ENCODE measurements at regions of chr20 and their contacts with region 1.

Region 1: GRCh38 chr20:35303735-35304491 is 11.7 kb upstream of the FAM83C start:
- DNase-seq: peak; percentile 89
- H3K4me3 ChIP-seq: no peak overlapping the region
- H3K27ac ChIP-seq: peak overlapping the region; percentile 95
- H3K4me1 ChIP-seq: peaks cover 74% of the 10 kb centered on the region
- H3K27me3 ChIP-seq: no peaks in the 10 kb centered on the region
- CTCF ChIP-seq: peak; percentile 88 to 97

Region 2: DNA sequence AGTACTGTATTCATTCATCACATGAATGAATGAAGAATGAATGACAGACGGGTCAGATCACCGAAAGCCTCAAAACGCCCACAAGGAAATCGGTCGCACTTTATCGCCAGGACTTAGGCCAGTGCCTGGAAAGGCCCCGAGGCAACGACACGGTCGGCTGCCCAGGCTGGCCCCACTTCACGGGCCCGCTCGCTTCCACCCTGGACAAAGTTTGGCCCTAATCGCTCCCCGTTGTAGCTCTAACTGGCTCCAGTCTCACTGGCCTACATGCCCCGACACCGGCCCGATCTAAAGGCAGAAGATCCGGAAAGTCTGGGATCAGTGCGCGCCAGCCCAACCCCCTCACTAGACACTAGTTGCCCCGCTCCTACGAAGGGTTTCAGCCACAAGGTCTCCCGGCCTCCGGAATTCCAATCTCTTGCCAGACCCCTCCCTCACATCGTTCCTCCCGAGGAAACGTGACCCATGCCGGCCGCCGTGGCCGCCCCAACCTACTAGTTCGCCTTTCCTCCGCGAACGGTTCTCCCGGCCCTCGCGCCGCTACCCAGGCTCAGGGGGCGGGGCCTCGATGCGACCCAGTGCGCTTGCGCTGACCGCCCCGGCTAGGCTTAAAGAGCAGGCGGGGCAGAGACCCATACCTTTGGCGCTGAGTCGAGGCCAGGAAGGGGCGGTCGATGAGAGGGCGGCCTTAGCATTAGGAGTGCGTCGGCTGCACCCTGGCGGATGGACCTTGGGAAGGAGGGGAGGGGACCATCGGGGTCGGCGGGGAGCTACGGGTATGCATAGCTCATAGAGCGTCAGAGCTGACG is 348.5 kb before region 1 on chr20 and contains the starts of genes GSS and MYH7B:
- CTCF ChIA-PET with region 1: no interaction called
- dilution Hi-C with region 1: no loop called
- in situ Hi-C with region 1: no loop called
- intact Hi-C with region 1: no loop called
- DNase-seq: peak; percentile 95
- H3K4me3 ChIP-seq: peak within 1 kb of the TSS; percentile 68 to 83 (median 79)
- H3K27ac ChIP-seq: peak within 1 kb of the TSS; percentile 76
- H3K4me1 ChIP-seq: peaks cover 6% of the 10 kb centered on the region
- H3K27me3 ChIP-seq: no peaks in the 10 kb centered on the region
- CTCF ChIP-seq: peak; percentile 6 to 66
- total RNA-seq, gene GSS: 102 to 115 TPM
- total RNA-seq, gene MYH7B: under 0.01 to 0.28 TPM

Region 3: DNA sequence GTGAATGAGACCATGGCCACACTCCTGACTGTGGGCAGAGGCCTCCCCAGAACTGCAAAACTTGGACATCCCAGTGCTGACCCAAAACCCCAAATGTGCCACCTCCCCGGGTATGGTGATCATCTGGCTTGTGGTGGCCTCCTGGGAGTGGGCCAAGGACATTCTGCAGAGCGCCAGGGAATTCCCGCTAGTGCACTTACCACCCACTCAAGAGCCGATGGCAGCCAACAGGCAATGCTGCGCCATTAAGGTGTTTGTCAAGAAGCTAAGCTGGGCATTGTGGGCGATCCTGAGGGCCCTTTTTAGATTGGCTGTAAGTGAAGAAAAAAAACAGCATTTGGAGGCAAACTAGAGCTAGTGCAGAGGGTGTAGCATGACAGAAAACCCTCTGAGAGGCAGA is 68.0 kb before region 1 on chr20:
- CTCF ChIA-PET with region 1: no interaction called
- dilution Hi-C with region 1: no loop called
- in situ Hi-C with region 1: no loop called
- intact Hi-C with region 1: no loop called
- DNase-seq: no peak
- H3K4me3 ChIP-seq: no peak overlapping the region
- H3K27ac ChIP-seq: no peak overlapping the region
- H3K4me1 ChIP-seq: no peaks in the 10 kb centered on the region
- H3K27me3 ChIP-seq: no peaks in the 10 kb centered on the region
- CTCF ChIP-seq: no peak

Region 4: GRCh38 chr20:35284267-35284991 is 19.5 kb before region 1 on chr20 and contains the start of gene EIF6:
- CTCF ChIA-PET with region 1: no interaction called
- dilution Hi-C with region 1: no loop called
- in situ Hi-C with region 1: no loop called
- intact Hi-C with region 1: loop called (anchors 1 kb)
- DNase-seq: peak; percentile 85
- H3K4me3 ChIP-seq: peak within 1 kb of the TSS; percentile 52 to 97 (median 67)
- H3K27ac ChIP-seq: peak within 1 kb of the TSS; percentile 73
- H3K4me1 ChIP-seq: peaks cover 28% of the 10 kb centered on the region
- H3K27me3 ChIP-seq: no peaks in the 10 kb centered on the region
- CTCF ChIP-seq: no peak
- total RNA-seq, gene EIF6: 203 to 285 TPM

Region 5: GRCh38 chr20:35329435-35330139 is 25.7 kb after region 1 on chr20:
- CTCF ChIA-PET with region 1: interaction called, 3 read pairs
- dilution Hi-C with region 1: no loop called
- in situ Hi-C with region 1: no loop called
- intact Hi-C with region 1: loop called (anchors 1 kb)
- DNase-seq: peak; percentile 31
- H3K4me3 ChIP-seq: no peak overlapping the region
- H3K27ac ChIP-seq: peak overlapping the region; percentile 14
- H3K4me1 ChIP-seq: peaks cover 24% of the 10 kb centered on the region
- H3K27me3 ChIP-seq: no peaks in the 10 kb centered on the region
- CTCF ChIP-seq: peak; percentile 61 to 65

Region 6: GRCh38 chr20:35359335-35359950 is 55.5 kb after region 1 on chr20:
- CTCF ChIA-PET with region 1: no interaction called
- dilution Hi-C with region 1: no loop called
- in situ Hi-C with region 1: no loop called
- intact Hi-C with region 1: loop called (anchors 5 kb)
- DNase-seq: no peak
- H3K4me3 ChIP-seq: no peak overlapping the region
- H3K27ac ChIP-seq: no peak overlapping the region
- H3K4me1 ChIP-seq: peaks cover 39% of the 10 kb centered on the region
- H3K27me3 ChIP-seq: no peaks in the 10 kb centered on the region
- CTCF ChIP-seq: no peak

Region 7: DNA sequence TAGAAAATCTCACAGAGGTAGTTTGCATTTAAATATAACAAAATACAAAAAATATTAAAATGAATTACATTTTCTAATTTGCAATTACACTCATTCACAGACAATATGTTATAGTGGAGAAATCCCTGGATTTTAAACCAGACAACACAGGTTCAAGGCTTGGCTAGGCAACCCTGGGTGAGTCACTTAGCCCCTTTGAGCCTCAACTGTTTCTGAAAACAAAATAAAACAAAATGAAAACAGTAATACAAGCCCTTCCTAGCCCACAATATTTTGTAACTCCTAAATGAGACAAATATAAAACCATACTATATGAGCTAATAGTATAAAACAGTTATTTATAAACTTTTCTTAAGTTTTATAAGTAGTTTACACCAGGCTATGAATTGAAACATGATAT is 66.8 kb after region 1 on chr20:
- CTCF ChIA-PET with region 1: no interaction called
- dilution Hi-C with region 1: no loop called
- in situ Hi-C with region 1: no loop called
- intact Hi-C with region 1: no loop called
- DNase-seq: no peak
- H3K4me3 ChIP-seq: no peak overlapping the region
- H3K27ac ChIP-seq: no peak overlapping the region
- H3K4me1 ChIP-seq: no peaks in the 10 kb centered on the region
- H3K27me3 ChIP-seq: no peaks in the 10 kb centered on the region
- CTCF ChIP-seq: no peak

Region 8: GRCh38 chr20:35454881-35455609 is 151.1 kb after region 1 on chr20 and contains the start of gene CEP250:
- CTCF ChIA-PET with region 1: no interaction called
- dilution Hi-C with region 1: loop called (anchors 5 kb)
- in situ Hi-C with region 1: loop called in 1 of 2 experiments (anchors 5 kb)
- intact Hi-C with region 1: no loop called
- DNase-seq: peak; percentile 93
- H3K4me3 ChIP-seq: peak within 1 kb of the TSS; percentile 55 to 82 (median 79)
- H3K27ac ChIP-seq: peak within 1 kb of the TSS; percentile 98
- H3K4me1 ChIP-seq: peaks cover 29% of the 10 kb centered on the region
- H3K27me3 ChIP-seq: no peaks in the 10 kb centered on the region
- CTCF ChIP-seq: no peak
- total RNA-seq, gene CEP250: 19.0 to 45.5 TPM

Region 9: DNA sequence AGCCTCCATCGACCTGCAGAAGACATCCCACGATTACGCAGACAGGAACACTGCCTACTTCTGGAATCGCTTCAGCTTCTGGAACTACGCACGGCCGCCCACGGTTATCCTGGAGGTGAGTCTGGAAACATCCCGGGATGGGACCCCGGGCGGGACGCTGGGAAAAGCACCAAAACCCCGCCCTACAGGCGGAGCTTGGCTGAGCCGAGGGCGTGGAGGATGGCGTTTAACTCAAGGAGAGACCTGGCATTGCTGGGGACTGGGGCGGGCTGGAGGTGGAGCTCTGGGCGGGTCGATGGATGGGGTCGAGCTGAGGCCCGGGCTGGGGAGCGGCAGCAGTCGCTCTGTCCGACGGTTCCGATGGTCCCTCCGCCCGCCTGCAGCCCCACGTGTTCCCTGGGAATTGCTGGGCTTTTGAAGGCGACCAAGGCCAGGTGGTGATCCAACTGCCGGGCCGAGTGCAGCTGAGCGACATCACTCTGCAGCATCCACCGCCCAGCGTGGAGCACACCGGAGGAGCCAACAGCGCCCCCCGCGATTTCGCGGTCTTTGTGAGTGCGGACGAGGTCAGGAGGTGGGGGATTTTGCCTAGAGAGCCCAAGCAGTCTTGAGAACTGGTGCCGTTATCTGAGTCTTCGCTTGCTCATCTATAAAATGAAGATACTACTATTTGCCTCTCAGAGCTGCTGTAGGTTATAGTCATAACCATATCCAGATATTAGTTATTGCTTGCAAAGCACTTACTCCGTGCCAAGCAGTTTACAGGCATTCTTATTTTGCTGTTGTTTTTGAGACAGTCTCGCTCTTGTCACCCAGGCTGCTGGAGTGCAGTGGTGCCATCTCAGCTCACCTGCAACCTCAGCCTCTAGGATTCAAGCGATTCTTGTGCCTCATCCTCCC is 315.5 kb after region 1 on chr20:
- CTCF ChIA-PET with region 1: no interaction called
- dilution Hi-C with region 1: no loop called
- in situ Hi-C with region 1: no loop called
- intact Hi-C with region 1: loop called (anchors 5 kb)
- DNase-seq: peak; percentile 78
- H3K4me3 ChIP-seq: peak overlapping the region; percentile 25 to 55 (median 51)
- H3K27ac ChIP-seq: no peak overlapping the region
- H3K4me1 ChIP-seq: peaks cover 33% of the 10 kb centered on the region
- H3K27me3 ChIP-seq: no peaks in the 10 kb centered on the region
- CTCF ChIP-seq: peak; percentile 33 to 46

Measured in mammary epithelial cell (primary cell).